ENCODE measurements at regions of chr20 and their contacts with region 1.

Region 1: DNA sequence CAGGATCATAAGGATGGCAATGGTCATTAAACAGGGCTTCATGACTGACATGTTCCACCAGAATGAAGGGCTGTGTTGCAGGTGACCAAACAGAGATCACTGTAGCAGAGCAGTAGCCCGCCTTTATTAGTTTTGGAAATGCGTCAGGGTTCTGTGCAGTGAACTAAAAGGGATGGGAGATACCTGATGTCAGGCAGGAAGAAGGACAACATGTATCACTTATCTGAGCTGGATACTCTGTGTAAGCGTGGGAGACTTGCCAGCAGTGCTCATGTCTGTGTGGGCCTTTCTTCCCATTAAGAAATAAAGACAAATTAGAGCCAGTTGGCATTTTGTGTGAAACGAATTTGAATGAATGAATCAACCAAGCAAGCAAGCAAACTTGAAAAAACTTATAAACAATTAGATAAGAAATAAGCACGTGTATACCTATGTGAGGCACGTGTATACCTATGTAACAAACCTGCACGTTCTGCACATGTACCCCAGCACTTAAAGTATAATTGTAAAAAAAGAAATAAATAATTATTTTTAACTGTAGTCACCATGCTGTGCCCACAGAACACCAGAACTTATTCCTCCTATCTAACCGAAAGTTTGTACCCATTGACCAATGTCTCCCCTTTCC is at the start of gene DEFB116:
- DNase-seq: no peak
- H3K4me3 Mint-ChIP-seq: no peak within 1 kb of the TSS
- H3K27ac Mint-ChIP-seq: no peak within 1 kb of the TSS
- H3K4me1 Mint-ChIP-seq: no peaks in the 10 kb centered on the region
- H3K27me3 Mint-ChIP-seq: no peaks in the 10 kb centered on the region
- total RNA-seq, gene DEFB116: not detected in 2 replicates

Region 2: GRCh38 chr20:29443819-29444218 is 1864.8 kb before region 1 on chr20:
- intact Hi-C with region 1: loop called (anchors 2 kb)
- DNase-seq: no peak
- H3K4me3 Mint-ChIP-seq: no peak overlapping the region
- H3K27ac Mint-ChIP-seq: no peak overlapping the region
- H3K4me1 Mint-ChIP-seq: no peaks in the 10 kb centered on the region
- H3K27me3 Mint-ChIP-seq: no peaks in the 10 kb centered on the region

Region 3: GRCh38 chr20:31322504-31322903 is 13.9 kb after region 1 on chr20:
- intact Hi-C with region 1: no loop called
- DNase-seq: no peak
- H3K4me3 Mint-ChIP-seq: no peak overlapping the region
- H3K27ac Mint-ChIP-seq: no peak overlapping the region
- H3K4me1 Mint-ChIP-seq: no peaks in the 10 kb centered on the region
- H3K27me3 Mint-ChIP-seq: no peaks in the 10 kb centered on the region

Measured in activated T-helper 1 cell treated with anti-CD3 and anti-CD28 coated beads, Interleukin-12 subunit alpha, Interleukin-12 subunit beta, Interleukin-2, Interleukin-4 antibody, amounts not matched to agents 30 ng/mL and 10 ng/mL and 1 ng/mL, durations not matched to agents 14 hours and 24 hours and 36 hours (primary cell).